H1 (cell line): ENCODE measurements at regions of chr19 and their contacts with region 1.

Region 1: GRCh38 chr19:42283143-42284065 is 14.4 kb downstream of the CIC start:
- DNase-seq: peak in 1 of 2 experiments; percentile 91
- H3K4me3 ChIP-seq: peak overlapping the region; percentile 42 to 57 (median 52)
- H3K27ac ChIP-seq: no peak overlapping the region
- H3K4me1 ChIP-seq: peaks cover 9 to 42% (median 29%) of the 10 kb centered on the region in 4 experiments
- H3K27me3 ChIP-seq: no peaks in the 10 kb centered on the region
- CTCF ChIP-seq: no peak
- EP300 ChIP-seq: no peak
- POLR2A ChIP-seq: no peak
- RAD21 ChIP-seq: no peak

Region 2: DNA sequence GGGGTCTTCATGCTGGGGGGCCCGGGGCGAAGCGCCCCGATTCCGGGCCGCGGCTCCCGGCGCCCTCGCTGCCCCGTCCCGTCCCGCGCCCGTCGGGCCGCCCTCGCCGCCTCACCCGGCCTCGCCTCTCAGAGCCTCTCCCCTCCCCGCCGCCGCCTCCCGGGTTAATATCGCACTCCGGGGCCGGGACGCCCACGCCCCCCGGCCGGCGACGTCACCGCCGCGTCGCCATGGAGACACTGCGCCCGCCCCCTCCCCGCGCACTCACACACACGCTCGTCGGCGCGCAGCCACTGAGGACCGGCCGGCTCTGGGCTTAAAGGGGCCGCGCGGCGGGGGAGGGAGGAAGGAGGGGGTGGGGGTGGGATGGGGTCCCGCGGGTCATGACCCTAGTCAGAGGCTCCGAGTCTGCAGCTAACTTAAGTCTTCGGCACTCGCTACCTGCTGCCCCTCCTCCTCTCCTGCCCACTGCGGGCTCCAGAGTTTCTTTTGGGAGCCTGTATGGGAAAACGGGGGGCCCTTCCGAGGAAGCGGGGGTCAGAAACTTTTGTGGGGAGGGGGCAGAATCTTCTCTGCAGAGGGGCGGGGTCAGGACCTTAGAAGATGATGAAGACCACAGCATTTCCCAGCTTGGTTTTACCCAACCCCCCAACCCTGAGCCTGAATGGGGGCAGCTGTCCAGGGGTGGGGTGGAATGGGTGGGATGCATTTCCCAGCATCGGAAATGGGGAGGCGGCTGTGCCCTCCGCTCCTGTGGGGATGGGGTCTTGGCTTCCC is 28.2 kb before region 1 on chr19 and contains the start of gene ERF:
- CTCF ChIA-PET with region 1: interaction called, 260 read pairs
- POLR2A ChIA-PET with region 1: interaction called, 15 read pairs
- DNase-seq: peak in 1 of 2 experiments; percentile 94
- H3K4me3 ChIP-seq: peak within 1 kb of the TSS; percentile 71 to 99 (median 78)
- H3K27ac ChIP-seq: peak within 1 kb of the TSS; percentile 89
- H3K4me1 ChIP-seq: peaks cover 11 to 29% (median 21%) of the 10 kb centered on the region in 4 experiments
- H3K27me3 ChIP-seq: peaks cover 0 to 3% (median 2%) of the 10 kb centered on the region in 4 experiments; a peak in 2 of 7 replicates
- CTCF ChIP-seq: no peak
- EP300 ChIP-seq: no peak
- POLR2A ChIP-seq: no peak; a peak in 1 of 3 replicates
- RAD21 ChIP-seq: no peak
- total RNA-seq, gene ERF: 62.7 and 73.9 TPM in 2 replicates

Region 3: DNA sequence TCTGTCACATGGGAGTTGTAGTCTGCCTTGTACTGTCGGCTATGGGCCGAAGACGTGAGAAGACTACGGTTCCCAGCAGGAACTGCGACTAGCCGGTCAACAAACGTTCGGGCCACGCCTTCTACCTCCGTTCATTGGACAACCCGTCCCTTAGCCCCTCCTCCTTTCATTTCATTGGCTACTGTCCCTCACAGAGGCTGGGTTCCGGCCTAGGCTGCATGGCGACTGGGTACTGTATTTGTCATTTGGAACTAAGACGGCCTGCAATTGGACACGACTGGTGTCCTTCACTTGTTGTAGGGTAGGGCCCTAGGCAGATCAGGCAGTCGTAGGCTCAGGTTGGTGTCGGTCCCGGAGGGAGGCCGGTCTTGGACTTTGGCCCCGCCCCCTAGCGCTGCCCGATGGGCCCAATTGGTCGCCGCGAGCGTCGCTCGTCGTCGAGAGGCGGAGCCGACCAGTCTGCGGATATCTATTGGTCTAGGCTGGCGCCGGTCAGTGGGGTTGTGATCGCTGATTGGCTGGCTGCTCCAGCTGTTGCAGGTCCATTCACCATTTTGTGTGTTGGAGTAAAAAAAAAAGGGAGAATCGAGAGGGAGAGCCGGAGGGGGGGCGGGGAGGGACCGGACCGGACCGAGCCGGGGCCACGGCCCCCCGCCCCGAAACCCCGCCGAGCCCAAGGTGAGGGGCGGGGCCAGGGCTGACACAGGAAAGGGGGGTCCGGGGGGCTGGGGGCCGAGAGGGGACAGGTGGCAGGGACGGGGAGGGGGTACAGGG is 14.5 kb before region 1 on chr19 and contains the start of gene CIC:
- CTCF ChIA-PET with region 1: interaction called, 35 read pairs
- POLR2A ChIA-PET with region 1: interaction called, 27 read pairs
- DNase-seq: peak; percentile 99 to 100
- H3K4me3 ChIP-seq: peak within 1 kb of the TSS; percentile 75 to 99 (median 86)
- H3K27ac ChIP-seq: peak within 1 kb of the TSS; percentile 100
- H3K4me1 ChIP-seq: peaks cover 2 to 21% (median 10%) of the 10 kb centered on the region in 4 experiments
- H3K27me3 ChIP-seq: no peaks in the 10 kb centered on the region
- CTCF ChIP-seq: no peak
- EP300 ChIP-seq: no peak
- POLR2A ChIP-seq: no peak
- RAD21 ChIP-seq: no peak
- total RNA-seq, gene CIC: 43.6 and 48.4 TPM in 2 replicates